GM10248 (cell line): ENCODE measurements at regions of chr2 and their contacts with region 1.

Region 1: DNA sequence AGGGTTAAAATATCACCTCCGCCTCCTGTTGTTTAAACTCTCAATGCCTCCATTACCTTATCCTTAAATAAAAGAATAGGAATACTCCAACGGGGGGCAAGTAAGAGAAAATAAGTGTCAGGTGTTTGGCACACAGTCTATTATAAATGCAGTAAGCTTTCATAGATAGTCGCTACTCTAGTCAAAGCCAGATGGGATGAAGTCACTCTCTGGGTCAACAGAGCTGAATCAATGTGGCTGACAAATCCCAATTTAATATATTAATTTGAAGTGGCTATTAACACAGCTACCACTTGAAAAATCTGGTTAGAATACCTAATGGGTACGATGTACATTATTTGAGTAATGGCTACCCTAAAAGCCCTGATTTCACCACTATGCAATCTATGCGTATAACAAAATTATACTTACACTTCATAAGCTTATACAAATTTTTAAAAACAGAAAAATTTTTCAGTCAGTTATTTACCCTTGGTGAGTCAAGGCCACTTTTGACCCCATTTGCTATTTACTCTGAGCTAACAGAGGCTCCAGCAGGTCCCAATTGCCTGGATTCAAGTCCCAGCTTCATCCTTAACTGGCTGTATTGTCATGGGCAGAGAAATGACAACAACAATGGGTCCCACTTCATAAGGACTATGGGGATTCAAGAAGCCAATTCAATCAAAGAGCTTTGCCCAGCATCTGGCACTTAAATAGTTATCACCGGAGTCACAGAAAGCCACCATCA is 167.5 kb upstream of the PID1 start:
- DNase-seq: no peak
- CTCF ChIP-seq: no peak

Region 2: GRCh38 chr2:229154381-229154780 is 284.2 kb before region 1 on chr2:
- CTCF ChIA-PET with region 1: no interaction called
- POLR2A ChIA-PET with region 1: no interaction called
- DNase-seq: no peak
- CTCF ChIP-seq: no peak

Region 3: DNA sequence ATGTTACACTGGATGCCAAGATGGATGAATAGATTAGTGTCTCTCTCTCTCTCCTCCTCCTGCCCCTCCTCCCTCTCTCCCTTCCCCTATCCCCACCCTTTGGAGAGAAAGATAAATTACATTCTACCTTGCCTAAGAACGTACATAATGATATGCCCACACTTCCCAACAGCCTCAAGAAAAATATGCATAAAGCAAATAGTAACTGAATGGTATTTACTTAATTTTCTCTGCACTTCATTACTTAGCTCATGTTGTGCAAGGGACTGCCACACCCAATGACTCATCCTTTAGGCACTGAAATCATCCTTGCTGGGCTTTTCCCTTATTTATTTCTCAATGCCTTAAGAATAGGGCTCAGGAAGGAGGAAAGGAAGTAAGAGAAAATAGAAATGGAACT is 30.2 kb before region 1 on chr2:
- CTCF ChIA-PET with region 1: no interaction called
- POLR2A ChIA-PET with region 1: no interaction called
- DNase-seq: no peak
- CTCF ChIP-seq: no peak

Region 4: GRCh38 chr2:229451852-229452251 is 13.3 kb after region 1 on chr2:
- CTCF ChIA-PET with region 1: interaction called, 12 read pairs
- POLR2A ChIA-PET with region 1: no interaction called
- DNase-seq: no peak
- CTCF ChIP-seq: no peak